ENCODE measurements at regions of chr3 and their contacts with region 1.

Region 1: DNA sequence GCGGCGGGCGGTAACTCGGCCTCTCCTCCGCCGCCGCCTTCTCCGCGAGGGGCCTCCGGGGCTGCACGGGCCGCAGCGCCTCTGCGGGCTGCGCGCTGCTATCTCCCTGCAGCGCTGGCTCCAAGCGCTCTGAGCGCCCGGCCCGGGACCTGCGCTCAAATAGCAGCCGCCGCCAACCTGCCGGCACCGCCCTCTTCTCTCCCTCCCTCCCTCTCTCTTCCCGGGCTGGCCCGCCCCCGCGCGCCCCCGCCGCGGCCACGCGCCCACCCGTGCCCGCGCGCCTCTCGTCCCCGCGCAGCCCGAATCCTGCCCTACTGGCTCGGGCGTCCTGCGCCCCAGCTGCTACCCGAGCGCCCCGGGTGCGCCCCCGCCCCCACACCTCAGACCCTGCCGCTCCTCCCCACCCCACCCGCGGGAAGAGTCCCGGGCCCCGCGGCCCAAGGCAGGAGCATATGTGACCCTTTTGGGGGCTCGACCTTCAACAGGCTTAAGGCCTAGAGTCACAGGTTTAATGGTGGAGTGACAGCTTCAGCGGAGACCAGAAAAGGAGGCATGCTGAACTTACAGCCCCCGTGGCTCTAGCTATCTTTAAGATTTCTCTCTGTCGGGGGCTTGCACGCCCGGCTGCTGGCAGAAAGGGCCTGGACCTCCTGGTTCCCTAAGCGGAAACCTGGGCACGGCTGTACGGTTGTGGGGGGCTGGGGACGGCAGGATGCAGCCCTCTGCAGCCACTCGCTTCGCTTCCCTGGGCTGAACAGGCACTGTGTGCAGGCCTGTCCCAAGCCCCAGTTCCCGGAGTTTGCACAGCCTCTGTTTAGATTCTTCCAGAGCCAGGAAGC is at the start of gene CACNA2D2:
- DNase-seq: peak in 1 of 2 experiments; percentile 82
- H3K4me3 ChIP-seq: peak within 1 kb of the TSS; percentile 47 to 94 (median 64)
- H3K27ac ChIP-seq: no peak within 1 kb of the TSS
- H3K4me1 ChIP-seq: peaks cover 0 to 15% (median 11%) of the 10 kb centered on the region in 4 experiments; a peak in 6 of 7 replicates
- H3K27me3 ChIP-seq: peaks cover 4 to 42% (median 27%) of the 10 kb centered on the region in 4 experiments
- CTCF ChIP-seq: 0 out of 4 replicates have a peak, but pooled peaks of 1 of the 3 experiments have one; percentile 4
- EP300 ChIP-seq: no peak
- POLR2A ChIP-seq: peak in 1 of 2 experiments; percentile 87; a peak in 2 of 3 replicates
- RAD21 ChIP-seq: peak in 1 of 2 experiments; percentile 19; a peak in 1 of 4 replicates
- total RNA-seq, gene CACNA2D2: 14.0 and 14.1 TPM in 2 replicates

Region 2: DNA sequence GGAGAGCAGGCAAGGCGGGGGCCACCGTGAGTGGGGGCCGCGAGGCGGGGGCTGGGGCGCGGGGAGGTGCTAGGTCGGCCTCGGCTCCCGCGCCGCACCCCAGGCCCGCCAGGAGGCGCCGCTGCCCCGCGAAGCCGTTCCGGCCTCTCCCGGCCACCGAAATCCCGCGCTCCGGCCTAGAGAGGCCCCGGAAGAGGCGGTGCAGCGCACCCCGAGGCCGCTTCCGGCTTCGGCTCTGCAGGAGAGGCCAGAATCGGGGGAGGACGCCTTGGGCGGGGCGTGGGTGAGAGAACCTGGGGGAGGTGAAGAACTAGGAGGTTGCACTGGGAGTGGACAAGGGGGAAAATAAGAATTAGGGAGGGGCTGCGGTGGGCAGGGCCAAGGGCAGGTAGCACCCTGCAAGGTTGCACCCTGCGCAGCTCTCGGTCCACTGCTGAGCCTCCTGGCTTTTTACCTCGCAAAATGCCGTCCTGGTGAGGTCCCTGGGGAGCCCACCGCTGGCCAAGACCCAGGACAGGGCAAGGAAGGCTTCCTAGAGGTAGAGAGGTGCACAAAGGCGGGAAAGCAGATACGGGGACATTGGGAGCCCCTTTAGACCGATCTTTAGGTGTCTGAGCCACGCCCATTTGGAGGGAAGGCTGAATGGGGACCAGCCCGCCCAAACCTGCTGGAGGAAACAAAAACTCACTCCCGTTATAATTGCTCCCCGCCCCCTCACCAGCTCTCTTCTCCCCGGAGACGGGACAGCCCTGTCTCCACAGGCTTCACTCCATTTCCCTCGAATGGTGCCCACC is 276.1 kb before region 1 on chr3:
- CTCF ChIA-PET with region 1: no interaction called
- POLR2A ChIA-PET with region 1: no interaction called
- DNase-seq: peak; percentile 89 to 94
- H3K4me3 ChIP-seq: peak overlapping the region; percentile 51 to 88 (median 73)
- H3K27ac ChIP-seq: peak overlapping the region; percentile 86
- H3K4me1 ChIP-seq: peaks cover 0 to 18% (median 6%) of the 10 kb centered on the region in 4 experiments; a peak in 6 of 7 replicates
- H3K27me3 ChIP-seq: peaks cover 0 to 3% (median 2%) of the 10 kb centered on the region in 4 experiments; a peak in 4 of 7 replicates
- CTCF ChIP-seq: peak in 2 of 3 experiments; percentile 67 to 97; a peak in 3 of 4 replicates
- EP300 ChIP-seq: no peak; a peak in 1 of 3 replicates
- POLR2A ChIP-seq: peak in 1 of 2 experiments; percentile 53; a peak in 2 of 3 replicates
- RAD21 ChIP-seq: peak; percentile 90 to 95

Region 3: GRCh38 chr3:50264370-50264963 is 239.3 kb before region 1 on chr3:
- CTCF ChIA-PET with region 1: no interaction called
- POLR2A ChIA-PET with region 1: no interaction called
- DNase-seq: peak; percentile 85 to 94
- H3K4me3 ChIP-seq: peak overlapping the region in 2 of 4 experiments; percentile 1 to 19; a peak in 1 of 8 replicates
- H3K27ac ChIP-seq: peak overlapping the region; percentile 69; the same call in 1 of the 2 replicates
- H3K4me1 ChIP-seq: peaks cover 0 to 59% (median 46%) of the 10 kb centered on the region in 4 experiments; a peak in 6 of 7 replicates
- H3K27me3 ChIP-seq: no peaks in the 10 kb centered on the region; a peak in 2 of 7 replicates
- CTCF ChIP-seq: no peak
- EP300 ChIP-seq: peak; percentile 46 to 61; a peak in 2 of 3 replicates
- POLR2A ChIP-seq: no peak
- RAD21 ChIP-seq: no peak

Region 4: GRCh38 chr3:50383750-50384149 is 120.0 kb before region 1 on chr3:
- CTCF ChIA-PET with region 1: no interaction called
- POLR2A ChIA-PET with region 1: no interaction called
- DNase-seq: no peak
- H3K4me3 ChIP-seq: no peak overlapping the region
- H3K27ac ChIP-seq: no peak overlapping the region
- H3K4me1 ChIP-seq: peaks cover 0 to 2% (median 2%) of the 10 kb centered on the region in 4 experiments; a peak in 3 of 7 replicates
- H3K27me3 ChIP-seq: peaks cover 0 to 3% (median 0%) of the 10 kb centered on the region in 4 experiments; a peak in 1 of 7 replicates
- CTCF ChIP-seq: no peak
- EP300 ChIP-seq: no peak
- POLR2A ChIP-seq: no peak
- RAD21 ChIP-seq: no peak

Region 5: DNA sequence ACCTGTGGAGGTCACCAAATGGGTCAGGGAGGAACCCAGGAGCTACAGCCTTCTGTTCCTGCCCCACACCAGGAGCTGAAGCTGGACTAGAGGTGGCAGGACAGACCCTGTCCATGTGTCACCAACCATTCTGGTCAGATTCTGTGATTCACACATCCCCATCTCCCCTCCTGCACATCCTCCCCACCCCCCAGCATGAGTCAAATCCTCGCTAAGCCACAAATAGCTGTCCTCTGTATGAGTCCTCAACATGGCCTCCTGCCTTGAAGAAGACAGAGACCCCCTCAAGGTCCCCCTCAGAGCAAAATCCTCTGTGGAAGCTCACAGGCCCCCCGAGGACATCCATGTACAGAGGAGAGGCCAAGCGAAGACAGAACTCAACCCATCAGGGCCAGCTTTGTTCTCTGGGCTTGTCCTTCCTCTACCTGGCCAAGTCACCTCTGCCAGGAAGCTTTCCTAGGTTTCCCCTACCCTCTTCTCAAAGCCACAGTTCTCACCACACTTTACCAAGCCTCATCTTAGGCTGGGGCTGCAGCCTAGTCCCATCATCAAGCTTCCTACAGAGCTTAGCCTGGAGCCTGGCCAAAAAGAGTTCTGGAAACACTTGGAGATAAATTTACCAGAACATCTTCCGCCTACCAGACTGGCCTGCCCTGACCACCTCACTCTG is 17.4 kb before region 1 on chr3:
- CTCF ChIA-PET with region 1: interaction called, 13 read pairs
- POLR2A ChIA-PET with region 1: interaction called, 4 read pairs
- DNase-seq: no peak
- H3K4me3 ChIP-seq: no peak overlapping the region
- H3K27ac ChIP-seq: no peak overlapping the region
- H3K4me1 ChIP-seq: peaks cover 3 to 35% (median 12%) of the 10 kb centered on the region in 4 experiments; a peak in 6 of 7 replicates
- H3K27me3 ChIP-seq: no peaks in the 10 kb centered on the region; a peak in 1 of 7 replicates
- CTCF ChIP-seq: no peak
- EP300 ChIP-seq: no peak
- POLR2A ChIP-seq: no peak
- RAD21 ChIP-seq: no peak

Region 6: DNA sequence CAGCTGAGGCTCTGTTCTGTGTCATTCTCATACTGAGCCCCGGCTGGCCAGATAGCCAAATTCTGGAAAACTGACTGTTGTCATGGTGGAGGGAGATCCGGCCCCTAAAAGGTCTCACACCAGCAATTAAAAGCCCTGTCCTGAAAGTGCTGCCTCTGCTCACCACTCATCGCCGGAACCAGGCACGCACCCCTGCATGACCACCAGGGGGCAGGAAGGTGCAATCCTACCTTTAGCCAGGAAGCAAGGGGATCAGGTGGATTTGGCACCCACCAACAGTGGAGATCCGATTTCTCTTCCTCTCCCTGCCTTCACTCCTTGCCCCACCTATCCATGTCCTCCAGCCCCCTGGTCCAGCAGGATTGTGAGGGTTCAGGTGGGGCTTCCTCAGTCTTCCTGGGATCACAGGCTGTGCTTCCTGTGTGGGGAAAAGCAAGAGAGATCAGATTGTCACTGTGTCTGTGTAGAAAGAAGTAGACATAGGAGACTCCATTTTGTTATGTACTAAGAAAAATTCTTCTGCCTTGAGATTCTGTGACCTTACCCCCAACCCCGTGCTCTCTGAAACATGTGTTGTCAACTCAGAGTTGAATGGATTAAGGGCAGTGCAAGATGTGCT is 15.9 kb after region 1 on chr3:
- CTCF ChIA-PET with region 1: interaction called, 17 read pairs
- POLR2A ChIA-PET with region 1: interaction called, 6 read pairs
- DNase-seq: peak; percentile 81 to 95
- H3K4me3 ChIP-seq: no peak overlapping the region
- H3K27ac ChIP-seq: no peak overlapping the region
- H3K4me1 ChIP-seq: peaks cover 3 to 55% (median 42%) of the 10 kb centered on the region in 4 experiments
- H3K27me3 ChIP-seq: no peaks in the 10 kb centered on the region
- CTCF ChIP-seq: peak in 2 of 3 experiments; percentile 95 to 99; a peak in 3 of 4 replicates
- EP300 ChIP-seq: no peak
- POLR2A ChIP-seq: no peak
- RAD21 ChIP-seq: peak; percentile 80 to 86

Measured in H1 (cell line).